Vagina (tissue), 2 donors: ENCODE measurements at regions of chr14 and their contacts with region 1.

Region 1: GRCh38 chr14:68248481-68249255 is 429.1 kb downstream of the RAD51B start:
- DNase-seq: no peak
- H3K4me3 ChIP-seq: no peak overlapping the region
- H3K27ac ChIP-seq: peak overlapping the region; percentile 92
- H3K4me1 ChIP-seq: peaks cover 90% of the 10 kb centered on the region
- H3K27me3 ChIP-seq: no peaks in the 10 kb centered on the region
- CTCF ChIP-seq: peak; percentile 11 to 66 (median 64)
- POLR2A ChIP-seq: no peak

Region 2: DNA sequence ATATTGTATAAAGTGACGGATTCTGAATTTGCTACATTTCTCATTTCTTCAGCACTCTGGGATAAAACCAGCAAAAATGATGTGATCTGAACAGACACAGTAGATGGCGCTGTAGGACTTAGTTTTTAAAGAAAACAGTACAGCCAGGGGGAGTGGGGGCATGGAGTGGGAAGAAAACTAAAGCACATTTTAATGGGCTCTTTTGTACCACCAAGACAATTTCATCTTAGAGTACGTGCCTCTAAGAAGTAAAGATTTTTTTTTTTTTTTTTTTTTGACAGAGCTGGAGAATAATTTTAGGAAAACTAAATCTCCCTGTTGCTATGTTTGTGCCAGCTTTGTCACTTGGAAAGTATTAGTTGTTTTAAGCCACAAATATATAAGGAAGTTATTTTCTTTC is 304.7 kb before region 1 on chr14:
- intact Hi-C with region 1: loop called (anchors 5 kb)
- DNase-seq: no peak
- H3K4me3 ChIP-seq: no peak overlapping the region
- H3K27ac ChIP-seq: peak overlapping the region; percentile 88
- H3K4me1 ChIP-seq: peaks cover 41% of the 10 kb centered on the region
- H3K27me3 ChIP-seq: no peaks in the 10 kb centered on the region
- CTCF ChIP-seq: peak; percentile 59 to 90 (median 68)
- POLR2A ChIP-seq: no peak

Region 3: GRCh38 chr14:68172627-68173026 is 76.0 kb before region 1 on chr14:
- intact Hi-C with region 1: no loop called
- DNase-seq: no peak
- H3K4me3 ChIP-seq: no peak overlapping the region
- H3K27ac ChIP-seq: no peak overlapping the region
- H3K4me1 ChIP-seq: peaks cover 53% of the 10 kb centered on the region
- H3K27me3 ChIP-seq: no peaks in the 10 kb centered on the region
- CTCF ChIP-seq: no peak
- POLR2A ChIP-seq: no peak

Region 4: DNA sequence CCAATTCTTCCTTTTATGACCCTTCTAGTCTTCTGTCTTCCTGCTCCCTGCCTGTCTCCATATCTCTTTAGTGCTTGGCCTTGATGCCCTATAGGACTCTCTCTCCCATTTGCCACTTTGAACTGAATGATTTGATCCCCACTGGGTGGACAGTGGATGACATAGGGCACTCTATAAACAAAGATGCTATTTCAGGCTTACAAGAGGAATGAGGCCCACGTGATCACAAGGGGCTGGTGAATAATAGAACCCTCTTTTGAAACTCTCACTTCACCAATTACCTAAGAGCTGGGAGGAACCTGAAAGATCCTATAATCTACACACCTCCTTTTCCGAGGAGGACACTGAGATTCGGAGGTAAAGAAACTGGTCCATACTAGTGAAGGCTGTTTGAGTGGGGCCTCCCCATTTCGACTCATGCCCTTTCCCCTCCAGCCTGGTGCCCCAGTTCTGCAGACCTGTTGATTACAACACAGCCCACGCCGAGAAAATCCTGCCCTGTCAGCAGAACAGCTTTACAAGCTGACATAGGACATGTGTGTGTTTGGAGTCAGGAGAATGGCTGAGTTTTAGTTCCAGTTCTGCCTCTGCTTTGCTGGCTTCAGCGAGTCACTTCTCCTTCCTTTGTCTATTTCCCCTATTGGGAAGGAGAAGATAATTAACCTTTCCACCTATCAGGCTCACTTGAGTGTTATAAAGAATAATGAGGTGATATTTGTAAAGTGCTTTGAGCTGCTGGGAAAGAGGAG is 143.9 kb after region 1 on chr14:
- intact Hi-C with region 1: loop called (anchors 5 kb)
- DNase-seq: no peak
- H3K4me3 ChIP-seq: no peak overlapping the region
- H3K27ac ChIP-seq: peak overlapping the region; percentile 77
- H3K4me1 ChIP-seq: peaks cover 52% of the 10 kb centered on the region
- H3K27me3 ChIP-seq: no peaks in the 10 kb centered on the region
- CTCF ChIP-seq: no peak
- POLR2A ChIP-seq: no peak

Region 5: DNA sequence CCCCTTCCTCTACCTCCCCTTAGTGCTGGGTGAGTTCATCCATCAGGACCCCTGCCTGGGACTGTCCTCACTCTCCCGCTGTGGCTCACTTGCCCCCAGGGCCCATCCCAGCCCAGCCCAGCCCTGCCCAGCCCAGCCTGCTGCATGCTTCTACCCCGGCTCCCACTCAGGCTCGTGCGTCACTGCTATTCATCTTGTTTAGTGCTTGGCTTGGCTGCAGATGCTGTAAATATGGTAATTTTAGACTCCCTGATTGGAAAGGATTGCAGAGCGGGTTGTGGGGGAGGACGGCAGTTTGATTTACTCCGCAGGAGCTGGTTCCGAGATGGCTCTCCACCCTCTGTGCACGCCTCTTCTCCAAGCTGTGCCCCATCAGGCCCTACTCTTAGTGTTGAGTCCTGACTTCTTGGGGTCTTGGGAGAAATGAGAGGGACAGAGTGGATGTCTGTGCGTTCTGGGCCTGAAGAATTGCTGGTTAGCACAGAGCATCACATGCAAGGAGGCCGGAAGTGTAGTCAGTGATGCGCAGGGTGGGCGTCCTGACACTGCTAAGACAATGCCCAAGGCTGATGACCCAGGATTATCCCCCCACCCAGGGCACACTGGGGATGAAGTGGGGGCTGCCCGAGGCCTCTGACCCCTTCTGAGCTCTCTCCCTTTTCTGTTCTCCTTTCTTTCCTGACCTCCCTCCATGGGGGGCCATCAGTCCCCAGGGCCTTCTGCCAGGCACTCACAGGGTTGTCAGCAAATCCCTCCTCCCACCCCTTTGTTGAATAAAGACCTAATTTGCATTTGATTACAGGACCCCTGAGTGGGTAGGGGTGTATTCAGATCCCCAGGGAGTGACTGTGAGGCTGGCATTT is 299.8 kb after region 1 on chr14:
- intact Hi-C with region 1: loop called (anchors 2 kb)
- DNase-seq: peak in 1 of 2 donors; percentile 98
- H3K4me3 ChIP-seq: peak overlapping the region in 1 of 2 donors; percentile 23
- H3K27ac ChIP-seq: peak overlapping the region; percentile 96
- H3K4me1 ChIP-seq: peaks cover 98% of the 10 kb centered on the region
- H3K27me3 ChIP-seq: no peaks in the 10 kb centered on the region
- CTCF ChIP-seq: no peak
- POLR2A ChIP-seq: no peak

Region 6: DNA sequence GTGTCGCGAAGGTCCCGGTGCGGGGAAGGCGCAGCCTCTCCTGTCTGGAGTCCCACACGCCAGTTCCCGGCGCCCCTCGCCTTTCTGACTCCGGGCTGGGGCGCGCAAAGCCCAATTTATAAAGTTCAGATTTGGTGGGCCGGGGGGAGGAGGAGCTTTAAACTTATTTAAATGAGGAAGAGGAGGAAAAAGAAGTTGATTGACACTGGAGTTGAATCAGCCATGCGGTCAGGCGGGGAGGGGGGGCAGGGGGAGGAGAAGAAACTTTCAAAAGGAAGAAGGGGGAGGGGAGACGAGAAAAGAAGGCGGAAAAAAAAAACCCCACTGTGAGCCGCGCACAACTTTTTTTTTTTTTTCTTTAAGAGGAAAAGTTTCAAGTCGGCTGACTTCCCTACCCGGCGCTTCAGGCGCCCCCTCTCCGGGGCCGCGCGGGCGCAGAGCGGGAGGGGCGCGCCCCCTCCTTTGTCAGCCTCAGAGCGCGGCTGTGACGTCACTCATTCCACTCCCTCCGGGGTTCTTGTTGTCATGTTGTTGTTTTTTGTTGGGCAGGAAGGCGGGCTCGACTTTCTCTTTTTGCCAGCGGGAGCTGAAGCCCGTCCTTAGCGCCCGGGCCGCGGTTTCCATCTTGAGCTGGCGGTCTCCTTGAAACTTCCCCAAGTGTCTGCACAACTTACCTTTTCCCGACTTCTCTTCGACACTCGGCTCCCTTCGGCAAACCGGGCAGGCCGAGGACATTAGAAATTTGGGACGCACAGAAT is 544.5 kb after region 1 on chr14 and contains the start of gene ZFP36L1:
- intact Hi-C with region 1: loop called (anchors 2 kb)
- DNase-seq: peak; percentile 96 to 98
- H3K4me3 ChIP-seq: peak within 1 kb of the TSS; percentile 84 to 95
- H3K27ac ChIP-seq: peak within 1 kb of the TSS; percentile 99
- H3K4me1 ChIP-seq: peaks cover 28% of the 10 kb centered on the region
- H3K27me3 ChIP-seq: no peaks in the 10 kb centered on the region
- CTCF ChIP-seq: no peak
- POLR2A ChIP-seq: peak; percentile 82 to 100
- total RNA-seq, gene ZFP36L1: 1,405 TPM

Region 7: DNA sequence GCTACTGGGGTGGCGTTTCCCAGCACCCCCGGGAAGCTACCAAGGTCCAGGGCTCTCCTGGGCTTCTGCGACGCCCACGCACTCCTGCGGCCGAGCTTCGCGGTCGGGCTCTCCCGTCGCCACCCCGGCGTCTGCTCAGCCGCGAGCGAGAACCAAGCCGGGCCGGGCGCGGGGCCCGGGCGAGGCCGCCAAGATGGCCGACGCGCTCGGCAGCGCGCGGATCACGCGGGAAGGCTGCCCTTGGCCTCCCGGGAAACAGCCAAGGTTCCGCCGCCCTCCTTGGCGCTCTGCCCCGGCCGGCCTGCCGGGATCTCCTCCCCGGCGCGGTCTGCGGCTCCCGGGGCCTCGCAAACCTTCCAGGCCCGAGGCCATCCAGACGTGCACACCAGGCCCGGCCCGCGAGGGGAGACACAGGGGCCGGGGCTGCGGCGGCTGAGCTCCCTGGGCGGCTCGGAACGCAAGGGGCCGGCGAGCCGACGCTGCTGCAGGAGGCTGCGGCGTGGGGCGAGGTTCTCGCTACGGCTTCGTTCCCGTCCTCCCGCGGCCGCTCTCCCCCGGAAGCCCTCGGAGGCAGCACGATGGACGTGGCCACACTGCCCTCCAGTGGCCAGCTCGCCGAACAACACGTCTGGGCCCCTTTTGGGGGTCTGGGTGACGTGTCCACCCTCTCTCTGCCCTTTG is 567.7 kb after region 1 on chr14:
- intact Hi-C with region 1: loop called (anchors 5 kb)
- DNase-seq: no peak
- H3K4me3 ChIP-seq: peak overlapping the region; percentile 48 to 67
- H3K27ac ChIP-seq: peak overlapping the region; percentile 95
- H3K4me1 ChIP-seq: peaks cover 70% of the 10 kb centered on the region
- H3K27me3 ChIP-seq: no peaks in the 10 kb centered on the region
- CTCF ChIP-seq: peak; percentile 82 to 99 (median 96)
- POLR2A ChIP-seq: peak in 1 of 2 donors; percentile 36